MCF 10A (cell line): ENCODE measurements at regions of chr21 and their contacts with region 1.

Region 1: GRCh38 chr21:43193651-43194302 is 25.0 kb downstream of the CRYAA start:
- DNase-seq: peak; percentile 81
- H3K4me3 Mint-ChIP-seq: peak overlapping the region; percentile 44
- H3K27ac Mint-ChIP-seq: peak overlapping the region; percentile 93
- H3K4me1 Mint-ChIP-seq: peaks cover 64% of the 10 kb centered on the region
- H3K27me3 Mint-ChIP-seq: no peaks in the 10 kb centered on the region
- CTCF ChIP-seq: no peak

Region 2: DNA sequence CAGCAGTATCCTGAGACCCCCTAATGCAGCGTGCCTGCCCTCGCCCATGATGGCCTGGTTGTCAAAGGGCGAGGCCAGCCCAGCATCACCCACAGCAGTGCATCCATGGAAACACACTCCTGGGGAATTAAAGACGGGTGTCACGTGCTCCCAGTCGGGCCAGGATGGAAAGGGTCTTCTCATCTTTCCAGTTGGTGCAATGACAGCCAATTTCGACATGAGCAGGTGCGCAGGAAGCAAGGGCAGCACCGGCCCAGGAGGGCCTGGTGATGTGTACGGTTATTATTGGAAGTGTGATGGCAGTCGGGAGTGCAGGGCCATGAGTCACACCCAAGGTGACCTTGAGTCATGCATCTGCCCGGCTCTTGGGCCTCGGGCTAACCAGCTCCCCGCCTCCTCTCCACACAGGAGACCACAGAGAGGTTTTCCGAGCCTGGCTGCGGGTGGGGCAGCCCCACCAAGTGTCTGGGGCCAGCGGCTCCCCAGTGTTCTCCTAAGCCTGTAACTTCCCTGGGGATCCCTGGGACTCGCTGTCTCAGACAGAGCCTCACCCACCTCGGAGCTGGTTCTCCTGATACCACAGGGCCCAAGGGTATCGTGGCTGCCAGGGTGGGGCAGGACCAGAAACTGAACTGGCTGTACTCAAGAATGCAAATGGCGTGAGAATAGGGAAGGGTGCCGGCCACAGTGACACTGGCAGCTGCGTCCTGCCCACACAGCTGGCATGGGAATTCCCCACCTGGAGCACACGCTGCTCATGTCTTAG is 113.3 kb after region 1 on chr21:
- CTCF ChIA-PET with region 1: interaction called, 3 read pairs
- POLR2A ChIA-PET with region 1: interaction called, 15 read pairs
- intact Hi-C with region 1: no loop called
- DNase-seq: peak; percentile 92
- H3K4me3 Mint-ChIP-seq: peak overlapping the region; percentile 41
- H3K27ac Mint-ChIP-seq: peak overlapping the region; percentile 99
- H3K4me1 Mint-ChIP-seq: peaks cover 41% of the 10 kb centered on the region
- H3K27me3 Mint-ChIP-seq: no peaks in the 10 kb centered on the region
- CTCF ChIP-seq: no peak

Region 3: DNA sequence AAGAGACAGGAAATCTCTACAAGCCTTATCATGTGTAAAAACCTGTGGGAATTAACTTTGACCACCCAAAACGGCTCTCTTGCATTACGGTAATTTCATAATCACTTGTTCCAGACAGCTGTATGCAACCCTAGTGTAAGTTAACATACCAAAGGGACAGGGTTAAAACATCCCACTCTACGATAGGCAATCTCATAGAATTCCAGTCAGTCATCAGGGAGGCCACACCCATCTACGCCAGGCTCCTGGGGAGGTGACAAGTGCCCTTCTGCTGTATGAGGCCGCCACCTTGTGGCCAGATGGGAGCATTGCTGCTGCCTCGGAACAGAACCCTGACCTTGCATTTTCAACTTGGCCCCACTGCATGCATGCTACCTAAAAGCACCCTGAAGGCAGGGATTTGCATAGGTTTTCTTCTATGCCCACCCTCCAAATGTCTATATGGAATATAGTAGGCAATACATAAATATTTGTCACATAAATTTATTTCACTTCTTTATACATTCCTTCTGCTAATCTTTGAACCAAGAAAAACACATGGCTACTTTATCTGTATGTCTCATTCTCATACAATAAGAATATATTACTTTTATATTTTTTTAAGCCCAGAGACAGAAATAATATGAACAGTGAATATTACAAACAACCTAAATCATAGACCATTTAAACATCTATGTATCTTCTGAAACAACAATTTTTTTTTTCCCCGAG is 452.9 kb after region 1 on chr21:
- CTCF ChIA-PET with region 1: interaction called, 10 read pairs
- POLR2A ChIA-PET with region 1: interaction called, 5 read pairs
- intact Hi-C with region 1: no loop called
- DNase-seq: peak; percentile 96
- H3K4me3 Mint-ChIP-seq: peak overlapping the region; percentile 50
- H3K27ac Mint-ChIP-seq: peak overlapping the region; percentile 88
- H3K4me1 Mint-ChIP-seq: peaks cover 26% of the 10 kb centered on the region
- H3K27me3 Mint-ChIP-seq: no peaks in the 10 kb centered on the region
- CTCF ChIP-seq: peak; percentile 97